ENCODE measurements at regions of chr4 and their contacts with region 1.

Region 1: GRCh38 chr4:177322266-177322665 is 12.6 kb downstream of the NEIL3 start:
- DNase-seq: no peak

Region 2: DNA sequence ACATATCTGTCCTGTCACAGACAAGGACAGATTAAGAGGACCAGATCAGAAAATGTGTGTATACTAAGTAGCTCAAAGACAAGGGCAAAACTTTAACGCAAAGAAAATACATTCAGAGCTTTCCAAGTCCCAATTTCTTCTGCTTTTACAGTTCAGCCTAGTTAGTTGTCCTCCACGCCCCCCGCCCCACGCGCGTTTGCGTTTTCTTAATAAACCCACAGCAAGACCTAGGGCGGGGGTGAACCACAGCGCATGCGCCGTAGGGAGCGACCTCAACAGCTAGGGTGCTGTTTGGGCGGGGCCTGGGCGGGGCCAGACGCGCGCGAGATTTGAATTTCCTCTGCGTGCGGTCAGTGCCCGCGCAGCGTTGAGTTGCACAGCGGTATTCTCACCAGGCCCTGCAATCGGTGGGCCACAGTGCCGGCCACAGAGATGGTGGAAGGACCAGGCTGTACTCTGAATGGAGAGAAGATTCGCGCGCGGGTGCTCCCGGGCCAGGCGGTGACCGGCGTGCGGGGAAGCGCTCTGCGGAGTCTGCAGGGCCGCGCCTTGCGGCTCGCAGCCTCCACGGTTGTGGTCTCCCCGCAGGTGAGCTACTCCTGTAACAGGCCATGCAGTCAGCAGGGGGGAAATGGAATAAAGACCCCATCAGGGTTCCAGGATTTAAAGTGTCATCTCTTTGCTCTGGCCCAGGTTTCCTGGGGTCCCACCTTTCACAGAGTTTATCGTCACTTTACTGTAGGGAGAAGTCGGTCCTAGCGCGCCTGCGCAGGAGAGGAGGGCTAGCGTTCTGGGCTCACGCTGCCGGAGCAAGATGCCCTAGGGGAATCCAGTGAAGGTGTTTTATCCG is 12.5 kb before region 1 on chr4 and contains the start of gene NEIL3:
- CTCF ChIA-PET with region 1: interaction called, 8 read pairs
- POLR2A ChIA-PET with region 1: interaction called, 11 read pairs
- DNase-seq: peak; percentile 92